Mammary epithelial cell (primary cell): ENCODE measurements at regions of chr14 and their contacts with region 1.

Region 1: DNA sequence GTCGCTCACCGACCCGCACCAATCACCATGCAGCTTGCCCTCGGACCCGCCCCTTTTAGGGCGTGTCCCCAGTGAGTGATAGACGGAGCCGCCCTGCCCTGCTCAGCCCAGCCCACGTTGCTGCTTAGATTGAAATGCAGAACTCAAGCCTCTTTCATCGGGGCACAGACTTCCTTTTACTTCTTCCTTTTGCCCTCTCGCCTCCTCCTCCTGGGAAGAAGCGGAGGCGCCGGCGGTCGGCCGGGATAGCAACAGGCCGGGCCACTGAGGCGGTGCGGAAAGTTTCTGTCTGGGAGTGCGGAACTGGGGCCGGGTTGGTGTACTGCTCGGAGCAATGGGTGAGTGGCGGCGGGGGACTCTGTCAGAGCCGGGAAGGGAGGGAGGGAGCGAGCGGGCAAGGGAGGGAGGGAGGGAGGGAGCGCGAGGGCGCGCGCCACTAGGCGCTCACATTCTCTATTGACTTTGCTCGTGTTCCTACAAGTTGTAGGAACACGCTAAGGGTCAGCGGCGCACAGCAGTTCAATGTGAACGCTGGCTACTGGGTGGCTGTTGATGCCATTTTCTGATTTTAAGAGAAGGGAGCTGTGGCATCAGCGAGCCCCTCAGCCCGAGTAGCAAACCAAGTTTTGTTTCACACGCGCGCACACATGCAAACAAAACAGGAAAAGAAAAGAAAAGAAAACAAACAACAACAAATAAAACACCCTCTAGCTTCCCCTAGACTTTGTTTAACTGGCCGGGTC is at the start of gene PAX9:
- DNase-seq: peak; percentile 87
- H3K4me3 ChIP-seq: peak within 1 kb of the TSS; percentile 49 to 59 (median 56)
- H3K27ac ChIP-seq: peak within 1 kb of the TSS; percentile 16
- H3K4me1 ChIP-seq: peaks cover 25% of the 10 kb centered on the region
- H3K27me3 ChIP-seq: peaks cover 57% of the 10 kb centered on the region
- CTCF ChIP-seq: no peak
- total RNA-seq, gene PAX9: 3.7 to 5.4 TPM

Region 2: GRCh38 chr14:36747411-36748184 is 85.7 kb after region 1 on chr14:
- CTCF ChIA-PET with region 1: no interaction called
- dilution Hi-C with region 1: no loop called
- in situ Hi-C with region 1: no loop called
- intact Hi-C with region 1: loop called (anchors 5 kb)
- DNase-seq: no peak
- H3K4me3 ChIP-seq: no peak overlapping the region
- H3K27ac ChIP-seq: no peak overlapping the region
- H3K4me1 ChIP-seq: no peaks in the 10 kb centered on the region
- H3K27me3 ChIP-seq: peaks cover 4% of the 10 kb centered on the region
- CTCF ChIP-seq: peak; percentile 56 to 65

Region 3: GRCh38 chr14:36767603-36768281 is 105.8 kb after region 1 on chr14:
- CTCF ChIA-PET with region 1: no interaction called
- dilution Hi-C with region 1: no loop called
- in situ Hi-C with region 1: no loop called
- intact Hi-C with region 1: loop called (anchors 5 kb)
- DNase-seq: peak; percentile 93
- H3K4me3 ChIP-seq: no peak overlapping the region
- H3K27ac ChIP-seq: peak overlapping the region; percentile 52
- H3K4me1 ChIP-seq: peaks cover 10% of the 10 kb centered on the region
- H3K27me3 ChIP-seq: no peaks in the 10 kb centered on the region
- CTCF ChIP-seq: no peak